ENCODE measurements at regions of chr6 and their contacts with region 1.

Region 1: DNA sequence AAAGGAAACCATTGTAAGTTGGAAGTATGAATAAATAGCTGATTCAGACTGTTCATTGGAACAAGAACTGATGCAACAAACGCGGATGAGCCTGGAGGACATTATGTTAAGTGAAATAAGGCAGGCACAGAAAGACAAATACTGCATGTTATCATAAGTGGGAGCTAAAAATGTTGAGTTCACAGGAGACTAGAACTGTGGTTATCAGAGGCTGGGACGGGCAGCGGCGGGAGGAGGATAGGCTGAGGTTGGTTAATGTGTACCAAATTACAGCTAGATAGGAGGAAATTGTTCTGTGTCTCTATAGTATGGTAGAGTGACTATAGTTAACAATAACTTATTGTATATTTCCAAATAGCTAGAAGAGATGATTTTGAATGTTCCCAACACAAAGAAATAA is 40.8 kb downstream of the FAM229B start:
- DNase-seq: no peak
- ATAC-seq: no peak
- H3K4me3 ChIP-seq: no peak overlapping the region
- H3K27ac ChIP-seq: no peak overlapping the region
- H3K4me1 ChIP-seq: no peaks in the 10 kb centered on the region
- H3K27me3 ChIP-seq: no peaks in the 10 kb centered on the region
- CTCF ChIP-seq: no peak
- POLR2A ChIP-seq: no peak
- RAD21 ChIP-seq: no peak

Region 2: GRCh38 chr6:112076200-112076599 is 52.0 kb before region 1 on chr6:
- CTCF ChIA-PET with region 1: no interaction called
- POLR2A ChIA-PET with region 1: no interaction called
- dilution Hi-C with region 1: no loop called
- in situ Hi-C with region 1: no loop called
- intact Hi-C with region 1: loop called (anchors 5 kb)
- DNase-seq: no peak
- ATAC-seq: no peak
- H3K4me3 ChIP-seq: no peak overlapping the region
- H3K27ac ChIP-seq: no peak overlapping the region
- H3K4me1 ChIP-seq: no peaks in the 10 kb centered on the region
- H3K27me3 ChIP-seq: no peaks in the 10 kb centered on the region
- CTCF ChIP-seq: no peak
- POLR2A ChIP-seq: no peak
- RAD21 ChIP-seq: no peak

Region 3: DNA sequence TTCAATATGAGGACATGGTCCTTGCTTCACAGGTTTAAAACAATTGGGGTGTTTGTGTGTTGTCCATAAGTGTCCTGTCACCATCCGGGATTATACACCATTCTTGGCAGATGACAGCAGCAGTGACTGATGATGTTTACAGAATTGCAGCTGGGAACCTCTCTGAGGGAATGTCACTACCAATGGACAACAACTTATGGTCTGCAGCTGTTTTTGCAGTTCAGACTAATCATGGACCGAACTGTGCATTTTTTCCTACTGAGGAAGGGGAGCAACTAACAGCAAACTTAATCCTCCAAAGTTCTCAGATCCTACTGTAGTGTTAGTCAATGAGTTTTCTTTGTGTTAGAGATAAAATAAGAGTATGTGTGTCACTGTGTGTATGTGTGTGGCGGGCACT is 14.8 kb before region 1 on chr6:
- CTCF ChIA-PET with region 1: no interaction called
- POLR2A ChIA-PET with region 1: no interaction called
- dilution Hi-C with region 1: no loop called
- in situ Hi-C with region 1: no loop called
- intact Hi-C with region 1: loop called (anchors 2 kb)
- DNase-seq: peak; percentile 20
- ATAC-seq: peak; percentile 46; the same call in 1 of the 2 replicates
- H3K4me3 ChIP-seq: no peak overlapping the region
- H3K27ac ChIP-seq: no peak overlapping the region
- H3K4me1 ChIP-seq: peaks cover 4% of the 10 kb centered on the region
- H3K27me3 ChIP-seq: no peaks in the 10 kb centered on the region
- CTCF ChIP-seq: no peak
- POLR2A ChIP-seq: no peak
- RAD21 ChIP-seq: no peak

Measured in IMR-90 (cell line).